ENCODE measurements at regions of chr1 and their contacts with region 1.

Region 1: GRCh38 chr1:236854602-236854978 is 59.5 kb downstream of the MTR start:
- DNase-seq: no peak
- ATAC-seq: no peak
- H3K4me3 ChIP-seq: no peak overlapping the region
- H3K4me3 Mint-ChIP-seq: no peak overlapping the region
- H3K27ac ChIP-seq: no peak overlapping the region
- H3K27ac Mint-ChIP-seq: no peak overlapping the region
- H3K4me1 ChIP-seq: no peaks in the 10 kb centered on the region
- H3K4me1 Mint-ChIP-seq: no peaks in the 10 kb centered on the region
- H3K27me3 ChIP-seq: no peaks in the 10 kb centered on the region
- H3K27me3 Mint-ChIP-seq: no peaks in the 10 kb centered on the region
- CTCF ChIP-seq: no peak

Region 2: DNA sequence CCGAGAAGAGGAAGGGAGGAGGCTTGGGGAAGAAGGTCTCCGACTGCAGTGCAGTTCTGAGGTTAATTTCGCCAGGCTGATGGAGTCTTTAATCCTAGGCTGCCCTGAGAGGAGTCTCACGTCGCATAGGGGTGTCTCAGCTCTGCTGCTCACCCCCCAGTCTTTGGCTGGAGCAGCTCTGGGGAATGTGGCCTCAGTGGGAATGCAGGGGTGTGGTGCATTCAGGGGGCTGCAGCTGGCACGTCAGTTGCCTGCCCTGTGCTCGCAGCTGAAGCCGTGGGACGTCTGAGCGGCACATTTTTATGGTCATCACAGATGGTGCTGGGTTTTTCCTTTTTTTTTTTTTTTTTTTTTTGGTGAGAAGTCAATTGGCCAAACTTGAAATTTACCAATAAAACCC is 130.1 kb before region 1 on chr1:
- CTCF ChIA-PET with region 1: no interaction called
- POLR2A ChIA-PET with region 1: no interaction called
- intact Hi-C with region 1: no loop called
- DNase-seq: no peak
- ATAC-seq: no peak
- H3K4me3 ChIP-seq: no peak overlapping the region
- H3K4me3 Mint-ChIP-seq: no peak overlapping the region
- H3K27ac ChIP-seq: no peak overlapping the region
- H3K27ac Mint-ChIP-seq: no peak overlapping the region
- H3K4me1 ChIP-seq: no peaks in the 10 kb centered on the region
- H3K4me1 Mint-ChIP-seq: no peaks in the 10 kb centered on the region
- H3K27me3 ChIP-seq: no peaks in the 10 kb centered on the region
- H3K27me3 Mint-ChIP-seq: peaks cover 18% of the 10 kb centered on the region
- CTCF ChIP-seq: no peak

Region 3: DNA sequence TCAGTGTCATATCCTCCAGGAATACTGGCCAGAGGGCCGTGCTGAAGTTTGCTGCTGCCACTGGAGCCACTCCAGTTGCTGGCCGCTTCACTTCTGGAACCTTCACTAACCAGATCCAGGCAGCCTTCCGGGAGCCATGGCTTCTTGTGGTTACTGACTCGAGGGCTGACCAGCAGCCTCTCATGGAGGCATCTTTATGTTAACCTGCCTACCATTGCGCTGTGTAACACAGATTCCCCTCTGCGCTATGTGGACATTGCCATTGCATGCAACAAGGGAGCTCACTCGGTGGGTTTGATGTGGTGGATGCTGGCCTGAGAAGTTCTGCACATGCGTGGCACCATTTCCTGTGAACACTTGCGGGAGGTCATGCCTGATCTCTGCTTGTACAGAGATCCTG is 34.7 kb before region 1 on chr1:
- CTCF ChIA-PET with region 1: no interaction called
- POLR2A ChIA-PET with region 1: no interaction called
- intact Hi-C with region 1: loop called in 1 of 2 experiments (anchors 5 kb)
- DNase-seq: peak in 1 of 9 experiments; percentile 11
- ATAC-seq: no peak
- H3K4me3 ChIP-seq: no peak overlapping the region
- H3K4me3 Mint-ChIP-seq: no peak overlapping the region
- H3K27ac ChIP-seq: no peak overlapping the region
- H3K27ac Mint-ChIP-seq: no peak overlapping the region
- H3K4me1 ChIP-seq: no peaks in the 10 kb centered on the region
- H3K4me1 Mint-ChIP-seq: peaks cover 28% of the 10 kb centered on the region
- H3K27me3 ChIP-seq: no peaks in the 10 kb centered on the region
- H3K27me3 Mint-ChIP-seq: no peaks in the 10 kb centered on the region
- CTCF ChIP-seq: no peak

Region 4: DNA sequence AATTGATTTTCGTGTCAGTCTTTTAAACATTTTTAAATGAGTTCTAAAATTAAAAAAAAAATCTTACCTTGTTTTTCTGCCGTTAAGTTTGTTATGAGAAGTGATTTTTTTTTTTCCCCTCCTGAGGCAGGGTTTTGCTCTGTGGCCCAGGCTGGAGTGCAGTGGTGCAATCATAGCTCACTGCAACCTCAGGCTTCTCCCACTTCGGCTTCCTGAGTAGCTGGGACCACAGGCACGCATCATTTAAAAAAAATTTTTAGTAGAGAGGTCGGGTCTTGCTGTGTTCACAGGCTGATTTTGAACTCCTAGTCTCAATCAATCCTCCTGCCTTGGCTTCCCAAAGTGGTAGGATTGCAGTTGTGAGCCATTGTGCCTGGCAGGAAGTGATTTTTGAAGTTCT is 18.4 kb before region 1 on chr1:
- CTCF ChIA-PET with region 1: no interaction called
- POLR2A ChIA-PET with region 1: no interaction called
- intact Hi-C with region 1: no loop called
- DNase-seq: no peak
- ATAC-seq: no peak
- H3K4me3 ChIP-seq: no peak overlapping the region
- H3K4me3 Mint-ChIP-seq: no peak overlapping the region
- H3K27ac ChIP-seq: no peak overlapping the region
- H3K27ac Mint-ChIP-seq: no peak overlapping the region
- H3K4me1 ChIP-seq: no peaks in the 10 kb centered on the region
- H3K4me1 Mint-ChIP-seq: peaks cover 7% of the 10 kb centered on the region
- H3K27me3 ChIP-seq: no peaks in the 10 kb centered on the region
- H3K27me3 Mint-ChIP-seq: no peaks in the 10 kb centered on the region
- CTCF ChIP-seq: no peak

Measured in CD8-positive, alpha-beta T cell (primary cell).